Ascending aorta (tissue), 2 donors: ENCODE measurements at regions of chr13 and their contacts with region 1.

Region 1: GRCh38 chr13:40236566-40237168 is 429.8 kb downstream of the FOXO1 start:
- DNase-seq: peak; percentile 67 to 94
- H3K4me3 ChIP-seq: peak overlapping the region in 1 of 2 donors; percentile 13
- H3K27ac ChIP-seq: peak overlapping the region; percentile 95 to 98
- H3K4me1 ChIP-seq: peaks cover 6 to 25% of the 10 kb centered on the region in 2 donors
- H3K27me3 ChIP-seq: no peaks in the 10 kb centered on the region
- CTCF ChIP-seq: no peak

Region 2: DNA sequence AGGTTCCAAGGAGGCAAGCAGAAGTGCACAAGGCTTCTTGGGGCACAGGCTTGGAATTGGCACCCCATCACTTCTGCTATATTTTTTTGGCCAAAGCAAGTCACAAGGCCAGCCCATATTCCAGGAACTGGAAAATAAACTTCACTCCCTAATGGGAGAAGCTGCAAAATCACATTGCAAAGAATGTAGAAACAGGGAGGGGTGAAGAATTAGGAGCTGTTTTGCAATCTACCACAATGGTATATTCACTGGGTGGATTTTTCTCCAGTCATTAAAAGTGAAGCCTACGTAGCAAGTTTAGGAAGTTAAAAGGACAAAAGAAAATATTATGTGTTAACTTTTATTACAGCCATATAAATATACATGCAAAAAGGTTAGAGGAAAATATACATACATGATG is 116.4 kb before region 1 on chr13:
- intact Hi-C with region 1: loop called (anchors 2 kb)
- DNase-seq: no peak
- H3K4me3 ChIP-seq: no peak overlapping the region
- H3K27ac ChIP-seq: peak overlapping the region; percentile 61 to 65
- H3K4me1 ChIP-seq: peaks cover 2 to 38% of the 10 kb centered on the region in 2 donors
- H3K27me3 ChIP-seq: no peaks in the 10 kb centered on the region
- CTCF ChIP-seq: no peak

Region 3: DNA sequence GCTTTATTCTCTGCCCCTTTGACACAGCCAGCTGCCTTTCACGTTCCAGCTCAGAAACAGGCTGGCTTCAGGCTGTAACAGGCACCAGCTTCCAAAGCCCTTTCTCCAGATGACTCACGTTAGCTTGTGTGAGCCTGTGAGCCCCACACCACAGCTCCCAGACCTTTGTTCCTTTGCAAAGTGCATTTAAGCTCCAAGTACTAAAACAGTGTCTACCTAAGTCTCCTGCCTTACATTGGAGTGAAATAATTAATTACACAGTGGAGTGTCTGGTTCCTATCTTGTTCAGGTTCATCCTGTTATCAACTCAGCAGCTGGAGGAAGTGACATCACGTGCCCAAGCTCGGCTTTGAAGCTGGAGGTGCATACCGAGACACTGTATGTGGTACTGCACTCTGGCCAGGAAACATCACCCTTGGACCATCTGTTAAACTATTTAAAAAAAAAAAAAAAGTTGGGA is 46.0 kb before region 1 on chr13:
- intact Hi-C with region 1: loop called (anchors 1 kb)
- DNase-seq: peak; percentile 37 to 84
- H3K4me3 ChIP-seq: no peak overlapping the region
- H3K27ac ChIP-seq: peak overlapping the region; percentile 78 to 96
- H3K4me1 ChIP-seq: peaks cover 35 to 54% of the 10 kb centered on the region in 2 donors
- H3K27me3 ChIP-seq: no peaks in the 10 kb centered on the region
- CTCF ChIP-seq: no peak

Region 4: GRCh38 chr13:40271931-40272775 is 35.5 kb after region 1 on chr13:
- intact Hi-C with region 1: loop called (anchors 1 kb)
- DNase-seq: peak; percentile 27 to 94
- H3K4me3 ChIP-seq: peak overlapping the region in 1 of 2 donors; percentile 18
- H3K27ac ChIP-seq: peak overlapping the region; percentile 88 to 90
- H3K4me1 ChIP-seq: peaks cover 5 to 29% of the 10 kb centered on the region in 2 donors
- H3K27me3 ChIP-seq: no peaks in the 10 kb centered on the region
- CTCF ChIP-seq: no peak

Region 5: GRCh38 chr13:40401911-40402776 is 165.5 kb after region 1 on chr13:
- intact Hi-C with region 1: loop called (anchors 5 kb)
- DNase-seq: peak; percentile 81 to 97
- H3K4me3 ChIP-seq: peak overlapping the region; percentile 28 to 42
- H3K27ac ChIP-seq: peak overlapping the region; percentile 62 to 68
- H3K4me1 ChIP-seq: peaks cover 4 to 16% of the 10 kb centered on the region in 2 donors
- H3K27me3 ChIP-seq: no peaks in the 10 kb centered on the region
- CTCF ChIP-seq: no peak

Region 6: GRCh38 chr13:40470660-40471059 is 234.0 kb after region 1 on chr13:
- intact Hi-C with region 1: loop called (anchors 5 kb)
- DNase-seq: peak in 1 of 2 donors; percentile 88
- H3K4me3 ChIP-seq: no peak overlapping the region
- H3K27ac ChIP-seq: peak overlapping the region; percentile 90
- H3K4me1 ChIP-seq: peaks cover 8 to 14% of the 10 kb centered on the region in 2 donors
- H3K27me3 ChIP-seq: no peaks in the 10 kb centered on the region
- CTCF ChIP-seq: no peak